IMR-90 (cell line): ENCODE measurements at regions of chr20 and their contacts with region 1.

Region 1: DNA sequence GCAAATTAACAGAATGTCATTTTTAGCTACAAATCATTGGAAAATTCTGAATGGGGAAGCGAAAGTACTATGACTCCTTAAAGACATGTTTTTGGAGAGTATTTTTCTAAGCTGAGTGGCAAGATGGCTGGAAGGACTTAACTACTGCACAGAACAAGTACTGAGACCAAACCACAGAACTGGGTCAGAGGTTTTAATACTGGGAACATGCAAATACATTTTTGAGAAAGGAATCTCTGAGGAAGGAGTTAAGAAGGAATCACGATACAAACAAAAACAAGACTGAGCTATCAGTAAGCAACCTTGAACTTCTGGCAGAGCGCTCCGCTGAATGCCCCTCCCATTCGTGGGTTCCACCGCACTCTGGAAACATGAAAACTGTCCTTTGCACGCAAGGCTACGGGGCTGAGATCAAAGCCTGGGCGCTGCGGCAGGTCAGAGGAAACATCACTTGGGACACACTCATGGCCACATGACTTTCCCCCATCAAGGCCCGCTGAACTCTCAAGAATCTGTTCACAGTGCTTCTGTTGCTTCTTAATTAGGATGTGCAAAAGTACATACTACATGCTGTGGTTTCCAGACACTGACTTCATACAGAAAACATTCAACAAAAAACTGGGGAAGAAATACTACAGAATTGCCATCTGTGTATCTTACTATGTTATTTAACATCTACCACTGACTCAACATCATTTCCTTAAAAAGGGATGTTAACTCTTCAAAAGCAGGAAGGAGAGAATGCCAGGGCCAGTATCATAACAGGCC is 27.8 kb downstream of the SLC23A2 start:
- DNase-seq: peak; percentile 90
- ATAC-seq: peak; percentile 84
- H3K4me3 ChIP-seq: peak overlapping the region; percentile 34
- H3K27ac ChIP-seq: peak overlapping the region; percentile 94
- H3K4me1 ChIP-seq: peaks cover 2% of the 10 kb centered on the region; the same call in 1 of the 2 replicates
- H3K27me3 ChIP-seq: no peaks in the 10 kb centered on the region
- CTCF ChIP-seq: no peak
- POLR2A ChIP-seq: no peak
- RAD21 ChIP-seq: no peak; the same call in 1 of the 2 replicates

Region 2: GRCh38 chr20:4488407-4489339 is 484.8 kb before region 1 on chr20:
- CTCF ChIA-PET with region 1: no interaction called
- POLR2A ChIA-PET with region 1: no interaction called
- dilution Hi-C with region 1: no loop called
- in situ Hi-C with region 1: no loop called
- intact Hi-C with region 1: no loop called
- DNase-seq: peak; percentile 85
- ATAC-seq: peak; percentile 95
- H3K4me3 ChIP-seq: no peak overlapping the region
- H3K27ac ChIP-seq: no peak overlapping the region
- H3K4me1 ChIP-seq: peaks cover 18% of the 10 kb centered on the region
- H3K27me3 ChIP-seq: no peaks in the 10 kb centered on the region
- CTCF ChIP-seq: no peak
- POLR2A ChIP-seq: no peak
- RAD21 ChIP-seq: 0 out of 2 replicates have a peak, but pooled peaks have one; percentile 3

Region 3: GRCh38 chr20:5090191-5090590 is 116.7 kb after region 1 on chr20:
- CTCF ChIA-PET with region 1: no interaction called
- POLR2A ChIA-PET with region 1: interaction called, 23 read pairs
- dilution Hi-C with region 1: no loop called
- in situ Hi-C with region 1: no loop called
- intact Hi-C with region 1: no loop called
- DNase-seq: no peak
- ATAC-seq: no peak
- H3K4me3 ChIP-seq: no peak overlapping the region
- H3K27ac ChIP-seq: no peak overlapping the region
- H3K4me1 ChIP-seq: no peaks in the 10 kb centered on the region
- H3K27me3 ChIP-seq: no peaks in the 10 kb centered on the region
- CTCF ChIP-seq: no peak
- POLR2A ChIP-seq: no peak
- RAD21 ChIP-seq: no peak